ENCODE measurements at regions of chr10 and their contacts with region 1.

Region 1: DNA sequence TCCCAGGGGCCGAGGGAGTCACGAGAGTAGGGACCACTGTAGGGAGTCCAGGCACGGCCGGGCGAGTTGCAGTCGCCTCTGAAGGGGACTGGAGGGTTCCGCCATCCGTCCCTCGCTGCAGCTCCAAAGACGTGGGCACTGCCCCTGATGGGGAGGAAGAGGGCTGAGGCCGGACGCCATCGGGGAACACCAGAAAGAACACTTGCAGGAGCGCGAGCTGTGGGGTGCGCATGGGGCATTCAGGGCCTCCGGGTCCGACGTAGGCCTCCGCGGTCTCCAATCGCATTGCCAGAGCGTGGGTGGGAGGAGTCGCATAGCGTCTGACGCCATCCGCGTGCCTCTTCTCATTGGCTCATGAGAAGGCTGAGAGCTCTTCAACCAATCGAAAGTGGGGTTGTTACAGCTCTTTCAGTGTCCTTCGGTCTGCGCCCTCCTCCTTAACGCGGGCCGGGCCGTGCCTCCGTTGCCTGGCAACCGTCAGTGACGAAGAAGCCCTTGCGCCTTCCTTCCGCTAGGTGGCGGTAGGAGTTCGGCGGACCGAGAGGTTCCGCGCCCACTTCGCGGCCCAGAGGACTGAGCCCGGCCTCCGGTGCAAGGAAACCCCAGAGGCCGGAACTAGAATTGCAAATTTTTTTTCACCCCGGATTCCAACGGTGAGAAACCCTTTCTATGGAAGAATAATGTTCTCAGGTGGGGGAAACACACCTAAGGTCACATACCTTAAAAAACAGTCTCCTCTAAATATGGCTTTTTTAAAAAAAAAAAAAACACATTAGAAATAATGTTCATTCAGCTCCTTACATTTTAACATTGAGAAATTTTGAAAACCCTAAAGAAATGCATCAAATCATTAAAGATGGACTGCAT is at the start of gene TCTN3:
- DNase-seq: peak; percentile 100
- ATAC-seq: peak; percentile 97
- H3K4me3 ChIP-seq: peak within 1 kb of the TSS; percentile 61 to 96 (median 73)
- H3K4me3 Mint-ChIP-seq: peak within 1 kb of the TSS; percentile 95
- H3K27ac ChIP-seq: peak within 1 kb of the TSS; percentile 58 to 93
- H3K27ac Mint-ChIP-seq: peak within 1 kb of the TSS; percentile 95
- H3K4me1 ChIP-seq: peaks cover 36 to 39% of the 10 kb centered on the region in 2 donors
- H3K4me1 Mint-ChIP-seq: peaks cover 67% of the 10 kb centered on the region
- H3K27me3 ChIP-seq: no peaks in the 10 kb centered on the region
- H3K27me3 Mint-ChIP-seq: no peaks in the 10 kb centered on the region
- CTCF ChIP-seq: peak; percentile 98
- total RNA-seq, gene TCTN3: 33.6 and 34.1 TPM in 2 replicates

Region 2: GRCh38 chr10:95716466-95717224 is 22.7 kb after region 1 on chr10:
- CTCF ChIA-PET with region 1: interaction called, 12 read pairs
- POLR2A ChIA-PET with region 1: no interaction called
- intact Hi-C with region 1: no loop called
- DNase-seq: no peak
- ATAC-seq: no peak
- H3K4me3 ChIP-seq: no peak overlapping the region
- H3K4me3 Mint-ChIP-seq: no peak overlapping the region
- H3K27ac ChIP-seq: no peak overlapping the region
- H3K27ac Mint-ChIP-seq: no peak overlapping the region
- H3K4me1 ChIP-seq: peaks cover 0 to 3% of the 10 kb centered on the region in 2 donors
- H3K4me1 Mint-ChIP-seq: peaks cover 7% of the 10 kb centered on the region
- H3K27me3 ChIP-seq: no peaks in the 10 kb centered on the region
- H3K27me3 Mint-ChIP-seq: no peaks in the 10 kb centered on the region
- CTCF ChIP-seq: no peak

Region 3: DNA sequence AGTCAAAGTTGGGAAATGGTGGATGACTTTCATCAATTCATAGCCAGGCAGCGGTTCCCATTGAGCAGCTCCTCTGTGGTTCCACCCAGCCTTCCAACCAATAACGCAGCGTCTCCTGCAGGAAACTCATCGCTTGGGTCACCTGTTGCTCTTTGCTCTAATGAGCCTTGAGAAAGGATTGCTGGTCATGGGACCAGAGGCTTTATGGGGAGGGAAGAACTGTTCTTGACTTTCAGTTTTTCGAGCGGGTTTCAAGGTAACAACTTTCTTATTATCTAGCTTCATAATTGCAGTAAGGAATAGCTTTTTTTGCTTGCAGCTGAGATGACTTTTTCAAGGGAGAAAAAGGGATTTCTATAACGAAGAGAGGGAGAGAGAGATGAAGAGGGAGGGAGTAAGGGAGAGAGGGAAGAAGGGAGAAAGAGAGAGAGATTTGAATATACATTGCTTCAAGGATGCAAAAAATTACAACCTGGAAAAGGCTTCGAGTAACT is 61.7 kb after region 1 on chr10:
- CTCF ChIA-PET with region 1: interaction called, 139 read pairs
- POLR2A ChIA-PET with region 1: interaction called, 29 read pairs
- intact Hi-C with region 1: loop called (anchors 1 kb)
- DNase-seq: peak; percentile 61
- ATAC-seq: no peak
- H3K4me3 ChIP-seq: peak overlapping the region; percentile 55 to 86 (median 68)
- H3K4me3 Mint-ChIP-seq: peak overlapping the region; percentile 99
- H3K27ac ChIP-seq: peak overlapping the region; percentile 58 to 94
- H3K27ac Mint-ChIP-seq: peak overlapping the region; percentile 97
- H3K4me1 ChIP-seq: peaks cover 49 to 52% of the 10 kb centered on the region in 2 donors
- H3K4me1 Mint-ChIP-seq: peaks cover 56% of the 10 kb centered on the region
- H3K27me3 ChIP-seq: no peaks in the 10 kb centered on the region
- H3K27me3 Mint-ChIP-seq: no peaks in the 10 kb centered on the region
- CTCF ChIP-seq: no peak

Region 4: DNA sequence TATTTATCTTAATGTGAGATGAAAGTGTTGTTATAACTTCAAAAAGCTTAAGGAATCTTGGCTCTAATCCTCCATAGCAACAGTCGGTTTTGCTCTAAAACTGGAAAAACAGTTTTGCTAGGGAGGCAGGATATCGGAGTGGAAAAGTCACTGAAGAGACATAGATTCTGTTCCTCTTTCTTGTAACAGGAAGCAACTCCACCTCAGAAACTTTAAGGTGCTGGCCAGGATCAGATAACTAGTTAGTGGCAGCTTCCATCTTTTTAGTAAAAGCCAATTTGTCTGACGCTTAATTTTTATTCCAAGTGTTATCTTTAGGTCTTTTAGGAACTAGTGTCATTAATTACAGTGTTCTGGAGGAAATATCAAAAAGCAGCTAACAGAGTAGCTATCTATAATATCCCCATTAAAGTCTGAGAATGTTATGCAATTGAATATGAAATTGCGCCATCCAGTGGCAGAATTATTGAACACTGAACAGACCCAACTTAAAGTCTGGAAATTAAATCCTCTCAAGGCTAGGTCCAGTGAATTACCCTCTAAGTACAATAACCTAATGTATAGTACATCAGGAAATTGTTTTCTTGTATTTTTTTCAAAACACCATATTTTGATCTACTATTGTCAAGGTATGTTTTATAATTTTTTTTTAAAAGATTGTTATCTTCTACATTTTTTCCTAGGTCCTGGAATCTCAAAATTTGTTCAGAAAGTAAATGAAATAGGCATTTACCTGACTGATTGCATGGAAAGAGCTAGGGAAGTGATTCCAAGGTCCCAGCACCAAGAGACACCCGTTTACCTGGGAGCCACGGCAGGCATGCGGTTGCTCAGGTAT is 148.0 kb after region 1 on chr10:
- CTCF ChIA-PET with region 1: interaction called, 704 read pairs
- POLR2A ChIA-PET with region 1: interaction called, 20 read pairs
- intact Hi-C with region 1: loop called (anchors 1 kb)
- DNase-seq: peak; percentile 85
- ATAC-seq: peak; percentile 42
- H3K4me3 ChIP-seq: peak overlapping the region in 2 of 5 experiments; percentile 23 to 48
- H3K4me3 Mint-ChIP-seq: peak overlapping the region; percentile 79
- H3K27ac ChIP-seq: peak overlapping the region; percentile 59 to 89
- H3K27ac Mint-ChIP-seq: peak overlapping the region; percentile 94
- H3K4me1 ChIP-seq: peaks cover 52 to 55% of the 10 kb centered on the region in 2 donors
- H3K4me1 Mint-ChIP-seq: peaks cover 48% of the 10 kb centered on the region
- H3K27me3 ChIP-seq: no peaks in the 10 kb centered on the region
- H3K27me3 Mint-ChIP-seq: no peaks in the 10 kb centered on the region
- CTCF ChIP-seq: peak; percentile 96

Region 5: DNA sequence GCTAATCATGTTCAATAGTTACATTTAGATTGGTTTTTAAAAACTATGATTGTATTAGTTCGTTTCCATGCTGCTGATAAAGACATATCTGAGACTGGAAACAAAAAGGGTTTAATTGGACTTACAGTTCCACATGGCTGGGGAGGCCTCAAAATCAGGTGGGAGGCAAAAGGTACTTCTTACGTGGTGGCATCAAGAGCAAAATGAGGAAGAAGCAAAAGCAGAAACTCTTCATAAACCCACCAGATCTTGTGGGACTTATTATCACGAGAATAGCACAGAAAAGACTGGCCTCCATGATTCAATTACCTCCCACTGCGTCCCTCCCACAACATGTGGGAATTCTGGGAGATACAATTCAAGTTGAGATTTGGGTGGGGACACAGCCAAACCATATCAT is 179.8 kb after region 1 on chr10:
- CTCF ChIA-PET with region 1: interaction called, 19 read pairs
- POLR2A ChIA-PET with region 1: interaction called, 3 read pairs
- intact Hi-C with region 1: no loop called
- DNase-seq: peak; percentile 38
- ATAC-seq: no peak
- H3K4me3 ChIP-seq: no peak overlapping the region
- H3K4me3 Mint-ChIP-seq: no peak overlapping the region
- H3K27ac ChIP-seq: peak overlapping the region in 1 of 2 donors; percentile 33
- H3K27ac Mint-ChIP-seq: peak overlapping the region; percentile 74
- H3K4me1 ChIP-seq: peaks cover 3 to 8% of the 10 kb centered on the region in 2 donors
- H3K4me1 Mint-ChIP-seq: peaks cover 10% of the 10 kb centered on the region
- H3K27me3 ChIP-seq: no peaks in the 10 kb centered on the region
- H3K27me3 Mint-ChIP-seq: no peaks in the 10 kb centered on the region
- CTCF ChIP-seq: no peak

Region 6: DNA sequence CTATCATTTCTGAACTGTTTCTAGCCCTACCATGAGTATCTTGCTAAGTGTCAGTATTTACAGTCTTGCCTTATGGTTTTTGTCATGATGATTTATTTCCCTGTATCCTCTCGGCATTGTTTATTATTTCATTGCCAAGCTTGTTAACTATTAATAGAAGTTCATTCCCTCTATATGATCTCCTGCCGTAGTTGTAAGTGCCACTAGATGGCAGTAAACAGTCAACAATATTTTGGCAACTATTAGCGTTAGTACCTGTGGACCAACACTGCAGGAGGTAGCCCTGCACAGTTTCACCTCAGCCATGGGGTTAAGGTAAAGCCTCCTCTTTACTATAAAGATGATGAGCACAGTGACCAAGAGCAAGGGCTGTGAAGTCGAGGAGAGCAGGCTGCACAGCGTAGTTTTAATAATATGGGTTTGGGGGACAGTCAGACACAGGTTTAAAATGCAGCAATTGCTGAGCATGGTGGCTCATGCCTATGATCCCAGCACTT is 323.3 kb after region 1 on chr10:
- CTCF ChIA-PET with region 1: interaction called, 3 read pairs
- POLR2A ChIA-PET with region 1: interaction called, 11 read pairs
- intact Hi-C with region 1: no loop called
- DNase-seq: peak; percentile 74
- ATAC-seq: peak; percentile 61
- H3K4me3 ChIP-seq: no peak overlapping the region
- H3K4me3 Mint-ChIP-seq: no peak overlapping the region
- H3K27ac ChIP-seq: no peak overlapping the region
- H3K27ac Mint-ChIP-seq: no peak overlapping the region
- H3K4me1 ChIP-seq: peaks cover 0 to 5% of the 10 kb centered on the region in 2 donors
- H3K4me1 Mint-ChIP-seq: peaks cover 4% of the 10 kb centered on the region
- H3K27me3 ChIP-seq: no peaks in the 10 kb centered on the region
- H3K27me3 Mint-ChIP-seq: no peaks in the 10 kb centered on the region
- CTCF ChIP-seq: peak; percentile 85